Endothelial cell of umbilical vein (primary cell): ENCODE measurements at regions of chr2 and their contacts with region 1.

Region 1: GRCh38 chr2:224039124-224039940 is at the start of gene SERPINE2:
- DNase-seq: peak; percentile 41
- H3K4me3 ChIP-seq: peak within 1 kb of the TSS; percentile 32 to 73 (median 41)
- H3K27ac ChIP-seq: no peak within 1 kb of the TSS
- H3K4me1 ChIP-seq: peaks cover 6% of the 10 kb centered on the region
- H3K27me3 ChIP-seq: peaks cover 29 to 41% of the 10 kb centered on the region in 2 experiments
- CTCF ChIP-seq: no peak
- POLR2A ChIP-seq: no peak
- total RNA-seq, gene SERPINE2: 8.8 and 15.5 TPM in 2 replicates

Region 2: DNA sequence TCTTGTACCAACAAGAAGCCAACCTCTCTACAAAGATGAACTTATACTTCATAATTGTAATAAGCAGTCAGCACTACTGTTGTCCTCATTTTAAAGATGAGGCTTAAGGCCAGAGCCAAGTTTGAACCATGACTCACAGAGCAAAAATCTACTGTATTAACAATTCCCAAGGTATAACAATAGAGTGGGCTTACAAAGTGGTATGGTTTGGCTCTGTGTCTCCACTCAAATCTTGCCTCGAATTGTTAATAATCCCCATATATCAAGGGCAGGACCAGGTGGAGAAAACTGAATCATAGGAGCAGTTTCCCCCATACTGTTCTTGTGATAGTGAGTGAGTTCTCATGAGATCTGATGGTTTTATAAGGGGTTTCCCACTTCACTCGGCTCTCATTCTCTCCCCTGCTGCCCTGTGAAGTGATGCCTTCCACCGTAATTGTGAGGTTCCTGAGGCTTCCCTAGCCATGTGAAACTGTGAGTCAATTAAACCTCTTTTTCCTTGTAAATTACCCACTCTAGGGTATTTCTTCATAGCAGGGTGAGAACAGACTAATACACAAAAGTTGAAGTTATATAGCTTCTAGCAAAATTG is 62.6 kb before region 1 on chr2:
- CTCF ChIA-PET with region 1: no interaction called
- POLR2A ChIA-PET with region 1: no interaction called
- dilution Hi-C with region 1: no loop called
- intact Hi-C with region 1: no loop called
- DNase-seq: peak; percentile 81
- H3K4me3 ChIP-seq: no peak overlapping the region
- H3K27ac ChIP-seq: peak overlapping the region; percentile 20
- H3K4me1 ChIP-seq: peaks cover 6% of the 10 kb centered on the region
- H3K27me3 ChIP-seq: no peaks in the 10 kb centered on the region
- CTCF ChIP-seq: no peak
- POLR2A ChIP-seq: no peak

Region 3: DNA sequence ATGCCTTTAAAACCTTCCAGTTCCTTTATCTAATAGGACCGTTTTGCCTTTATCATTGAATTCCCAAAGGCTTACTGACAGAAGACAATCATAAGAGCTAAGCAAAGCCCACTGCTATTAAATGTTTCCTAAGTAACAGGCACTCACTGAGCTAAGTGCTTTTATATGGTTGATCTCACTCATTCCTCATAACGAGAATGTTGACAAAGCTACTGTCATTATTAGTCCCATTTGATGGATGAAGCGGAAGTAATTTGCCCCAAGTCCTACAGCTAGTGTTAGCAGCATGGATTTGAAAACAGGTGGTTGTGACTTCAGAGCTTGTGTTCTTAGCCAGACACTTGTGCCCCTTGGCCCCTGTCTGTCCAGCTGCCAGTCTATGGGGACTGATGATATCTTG is 134.6 kb after region 1 on chr2:
- CTCF ChIA-PET with region 1: no interaction called
- POLR2A ChIA-PET with region 1: no interaction called
- dilution Hi-C with region 1: no loop called
- intact Hi-C with region 1: loop called (anchors 2 kb)
- DNase-seq: no peak
- H3K4me3 ChIP-seq: no peak overlapping the region
- H3K27ac ChIP-seq: no peak overlapping the region
- H3K4me1 ChIP-seq: peaks cover 31% of the 10 kb centered on the region
- H3K27me3 ChIP-seq: peaks cover 0 to 2% of the 10 kb centered on the region in 2 experiments
- CTCF ChIP-seq: no peak
- POLR2A ChIP-seq: no peak

Region 4: GRCh38 chr2:224221455-224221913 is 182.2 kb after region 1 on chr2:
- CTCF ChIA-PET with region 1: no interaction called
- POLR2A ChIA-PET with region 1: no interaction called
- dilution Hi-C with region 1: no loop called
- intact Hi-C with region 1: loop called (anchors 1 kb)
- DNase-seq: peak; percentile 88
- H3K4me3 ChIP-seq: no peak overlapping the region
- H3K27ac ChIP-seq: peak overlapping the region; percentile 99
- H3K4me1 ChIP-seq: peaks cover 26% of the 10 kb centered on the region
- H3K27me3 ChIP-seq: no peaks in the 10 kb centered on the region
- CTCF ChIP-seq: no peak
- POLR2A ChIP-seq: no peak